ENCODE measurements at regions of chr22 and their contacts with region 1.

Region 1: DNA sequence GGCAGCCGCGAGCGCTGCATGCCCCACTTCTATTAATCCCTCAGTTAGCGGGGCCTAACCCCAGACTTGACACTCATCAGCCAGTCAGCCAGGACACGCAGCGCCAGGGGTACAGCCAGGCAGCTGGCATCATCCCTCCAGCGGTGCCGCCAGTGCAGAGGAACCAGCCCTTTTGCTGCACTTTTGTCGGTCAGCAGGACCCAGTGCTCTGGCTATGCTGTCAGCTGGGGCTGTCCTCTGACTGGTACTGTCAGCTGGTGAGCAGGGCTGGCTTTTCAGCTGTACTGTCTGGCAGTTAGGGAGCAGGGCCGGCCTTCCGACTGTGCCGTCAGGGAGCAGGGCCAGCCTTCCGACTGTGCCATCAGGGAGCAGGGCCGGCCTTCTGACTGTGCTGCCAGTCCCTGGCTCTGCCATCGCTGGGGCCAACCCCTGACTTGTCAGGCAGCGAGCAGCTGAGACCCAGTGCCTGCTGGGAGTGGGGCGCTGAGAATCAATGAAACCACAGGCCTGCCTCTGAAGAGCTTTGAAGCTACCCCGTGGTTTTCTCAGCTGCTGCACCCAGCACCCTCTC is 115.4 kb downstream of the KIAA1671 start:
- DNase-seq: peak; percentile 95
- H3K4me3 Mint-ChIP-seq: peak overlapping the region; percentile 86
- H3K27ac Mint-ChIP-seq: peak overlapping the region; percentile 99
- H3K4me1 Mint-ChIP-seq: peaks cover 93% of the 10 kb centered on the region
- H3K27me3 Mint-ChIP-seq: no peaks in the 10 kb centered on the region

Region 2: GRCh38 chr22:25057013-25057881 is 10.7 kb before region 1 on chr22:
- CTCF ChIA-PET with region 1: interaction called, 15 read pairs
- POLR2A ChIA-PET with region 1: no interaction called
- DNase-seq: peak; percentile 79
- H3K4me3 Mint-ChIP-seq: no peak overlapping the region
- H3K27ac Mint-ChIP-seq: no peak overlapping the region
- H3K4me1 Mint-ChIP-seq: peaks cover 48% of the 10 kb centered on the region
- H3K27me3 Mint-ChIP-seq: no peaks in the 10 kb centered on the region

Region 3: DNA sequence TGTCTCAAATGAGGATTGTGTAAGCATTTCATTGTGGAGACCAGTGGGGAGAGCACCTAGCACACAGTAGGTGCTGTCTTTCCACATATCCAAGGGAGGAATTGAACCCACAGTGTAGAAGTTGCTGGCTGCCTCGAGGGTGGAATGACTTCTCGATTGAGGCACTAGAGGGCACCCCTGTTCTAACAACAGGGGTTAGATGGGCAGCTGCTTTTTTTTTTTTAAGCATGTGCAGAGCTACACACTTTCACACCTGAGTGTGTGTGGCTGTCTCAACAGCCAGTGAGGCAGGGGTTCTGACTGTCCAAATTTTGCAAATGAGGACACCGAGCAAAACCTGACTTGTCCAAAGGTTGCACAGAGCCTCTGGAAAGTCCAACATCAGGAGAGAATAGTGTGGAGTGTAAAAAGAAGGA is 13.5 kb after region 1 on chr22:
- CTCF ChIA-PET with region 1: interaction called, 20 read pairs
- POLR2A ChIA-PET with region 1: interaction called, 3 read pairs
- DNase-seq: peak; percentile 67
- H3K4me3 Mint-ChIP-seq: no peak overlapping the region
- H3K27ac Mint-ChIP-seq: peak overlapping the region; percentile 51
- H3K4me1 Mint-ChIP-seq: peaks cover 78% of the 10 kb centered on the region
- H3K27me3 Mint-ChIP-seq: no peaks in the 10 kb centered on the region